HepG2 (cell line): ENCODE measurements at regions of chr1 and their contacts with region 1.

Region 1: GRCh38 chr1:179882243-179883039 is at the start of gene TOR1AIP1:
- DNase-seq: peak; percentile 93
- ATAC-seq: peak; percentile 82
- H3K4me3 ChIP-seq: peak within 1 kb of the TSS; percentile 82 to 92 (median 90)
- H3K27ac ChIP-seq: peak within 1 kb of the TSS; percentile 97
- H3K4me1 ChIP-seq: peaks cover 27% of the 10 kb centered on the region
- H3K27me3 ChIP-seq: no peaks in the 10 kb centered on the region; a peak in 1 of 5 replicates
- CTCF ChIP-seq: peak; percentile 57
- EP300 ChIP-seq: no peak; a peak in 2 of 4 replicates
- POLR2A ChIP-seq: peak; percentile 83
- RAD21 ChIP-seq: peak; percentile 64
- total RNA-seq, gene TOR1AIP1: 23.8 and 29.0 TPM in 2 replicates

Region 2: DNA sequence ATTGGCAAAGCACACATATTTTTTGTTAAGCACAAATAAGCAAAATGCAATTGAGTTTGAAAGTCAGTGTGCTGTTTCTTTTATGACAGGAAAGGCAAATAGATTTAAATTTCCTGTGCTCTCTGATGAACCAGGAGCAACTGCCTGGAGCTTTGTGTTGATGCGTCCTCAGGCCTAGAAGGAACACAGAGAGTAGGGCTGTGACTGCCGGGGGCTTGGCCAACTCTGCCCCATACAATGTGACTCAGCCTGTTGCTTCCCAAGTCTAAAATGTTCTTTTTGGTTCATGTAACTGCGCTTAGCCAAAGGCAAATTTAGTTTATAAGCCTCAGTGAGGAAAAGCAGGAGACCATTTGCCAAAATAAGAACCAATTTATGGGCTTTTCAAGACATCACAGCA is 42.3 kb before region 1 on chr1:
- CTCF ChIA-PET with region 1: no interaction called
- POLR2A ChIA-PET with region 1: no interaction called
- in situ Hi-C with region 1: no loop called
- intact Hi-C with region 1: no loop called
- DNase-seq: no peak
- ATAC-seq: no peak
- H3K4me3 ChIP-seq: no peak overlapping the region
- H3K27ac ChIP-seq: no peak overlapping the region
- H3K4me1 ChIP-seq: no peaks in the 10 kb centered on the region
- H3K27me3 ChIP-seq: no peaks in the 10 kb centered on the region
- CTCF ChIP-seq: no peak
- EP300 ChIP-seq: no peak
- POLR2A ChIP-seq: no peak
- RAD21 ChIP-seq: no peak

Region 3: DNA sequence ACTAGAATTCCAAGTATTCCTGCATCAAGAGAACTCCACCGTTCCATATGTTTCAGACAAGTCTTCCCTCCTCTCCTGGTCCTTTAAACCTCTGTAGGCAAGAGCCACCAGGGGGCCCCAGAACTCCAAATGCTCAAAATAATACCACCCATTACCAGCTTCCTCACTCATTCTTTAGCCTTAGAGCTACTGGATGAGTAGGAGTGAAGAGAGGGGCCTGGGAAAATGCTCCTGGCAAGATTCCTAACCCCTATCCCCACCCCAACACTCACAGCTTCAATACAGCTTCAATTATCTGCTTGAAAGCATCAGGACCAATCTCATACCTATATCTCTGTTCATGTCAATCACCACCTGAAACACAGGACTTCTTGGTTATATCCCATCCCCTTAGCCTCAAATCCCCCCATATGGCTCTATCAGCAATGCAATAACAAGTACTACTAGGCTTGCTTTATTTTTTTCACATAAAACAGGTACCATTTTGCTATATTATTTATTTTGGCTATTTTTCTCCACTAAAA is 14.6 kb before region 1 on chr1:
- CTCF ChIA-PET with region 1: interaction called, 4 read pairs
- POLR2A ChIA-PET with region 1: interaction called, 13 read pairs
- in situ Hi-C with region 1: no loop called
- intact Hi-C with region 1: loop called (anchors 1 kb)
- DNase-seq: peak; percentile 58
- ATAC-seq: peak; percentile 96
- H3K4me3 ChIP-seq: no peak overlapping the region
- H3K27ac ChIP-seq: no peak overlapping the region
- H3K4me1 ChIP-seq: peaks cover 27% of the 10 kb centered on the region
- H3K27me3 ChIP-seq: no peaks in the 10 kb centered on the region
- CTCF ChIP-seq: peak; percentile 71
- EP300 ChIP-seq: no peak
- POLR2A ChIP-seq: no peak
- RAD21 ChIP-seq: peak; percentile 54

Region 4: GRCh38 chr1:180168786-180169639 is 286.6 kb after region 1 on chr1:
- CTCF ChIA-PET with region 1: no interaction called
- POLR2A ChIA-PET with region 1: no interaction called
- in situ Hi-C with region 1: loop called (anchors 10 kb)
- intact Hi-C with region 1: loop called (anchors 5 kb)
- DNase-seq: peak; percentile 43
- ATAC-seq: peak; percentile 94
- H3K4me3 ChIP-seq: no peak overlapping the region
- H3K27ac ChIP-seq: no peak overlapping the region
- H3K4me1 ChIP-seq: peaks cover 40% of the 10 kb centered on the region
- H3K27me3 ChIP-seq: no peaks in the 10 kb centered on the region
- CTCF ChIP-seq: peak; percentile 83
- EP300 ChIP-seq: no peak
- POLR2A ChIP-seq: no peak
- RAD21 ChIP-seq: peak; percentile 73